Calu3 (cell line): ENCODE measurements at regions of chr7 and their contacts with region 1.

Region 1: DNA sequence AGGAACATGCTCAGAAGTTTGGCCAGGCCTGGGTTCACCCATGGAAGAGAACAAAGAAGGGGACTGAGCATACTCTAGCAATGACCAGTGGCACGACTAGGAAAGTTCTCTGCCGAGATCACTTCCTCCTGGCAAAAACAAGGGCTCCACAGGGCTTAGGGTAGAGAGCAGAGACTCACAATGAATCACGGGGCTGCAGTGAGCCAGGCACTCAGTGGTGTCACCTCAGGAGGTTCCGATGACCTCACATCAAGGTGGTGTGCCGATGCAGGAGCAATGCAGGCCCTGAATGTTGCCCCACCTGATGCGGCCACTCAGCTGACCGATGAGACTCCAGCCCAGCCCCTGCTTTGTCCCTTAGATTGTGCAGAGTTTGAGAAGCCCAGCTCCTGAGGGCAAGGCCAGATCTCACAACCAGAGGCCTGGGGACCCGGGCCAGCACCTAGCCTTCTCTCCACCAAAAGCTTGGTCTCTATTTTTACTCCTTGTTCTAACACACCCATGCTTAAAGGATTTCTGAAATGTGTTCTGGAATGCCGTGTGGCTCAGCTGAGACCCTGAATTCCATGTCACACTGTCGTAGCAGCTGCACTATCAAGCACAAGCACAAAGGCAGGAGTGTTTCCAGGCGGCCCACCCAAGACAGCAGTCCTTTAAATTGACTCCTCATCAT is 60.9 kb downstream of the COBL start:
- DNase-seq: peak; percentile 67
- H3K4me3 Mint-ChIP-seq: peak overlapping the region; percentile 29
- H3K27ac Mint-ChIP-seq: peak overlapping the region; percentile 45
- H3K4me1 Mint-ChIP-seq: peaks cover 65% of the 10 kb centered on the region
- H3K27me3 Mint-ChIP-seq: no peaks in the 10 kb centered on the region
- CTCF ChIP-seq: no peak

Region 2: DNA sequence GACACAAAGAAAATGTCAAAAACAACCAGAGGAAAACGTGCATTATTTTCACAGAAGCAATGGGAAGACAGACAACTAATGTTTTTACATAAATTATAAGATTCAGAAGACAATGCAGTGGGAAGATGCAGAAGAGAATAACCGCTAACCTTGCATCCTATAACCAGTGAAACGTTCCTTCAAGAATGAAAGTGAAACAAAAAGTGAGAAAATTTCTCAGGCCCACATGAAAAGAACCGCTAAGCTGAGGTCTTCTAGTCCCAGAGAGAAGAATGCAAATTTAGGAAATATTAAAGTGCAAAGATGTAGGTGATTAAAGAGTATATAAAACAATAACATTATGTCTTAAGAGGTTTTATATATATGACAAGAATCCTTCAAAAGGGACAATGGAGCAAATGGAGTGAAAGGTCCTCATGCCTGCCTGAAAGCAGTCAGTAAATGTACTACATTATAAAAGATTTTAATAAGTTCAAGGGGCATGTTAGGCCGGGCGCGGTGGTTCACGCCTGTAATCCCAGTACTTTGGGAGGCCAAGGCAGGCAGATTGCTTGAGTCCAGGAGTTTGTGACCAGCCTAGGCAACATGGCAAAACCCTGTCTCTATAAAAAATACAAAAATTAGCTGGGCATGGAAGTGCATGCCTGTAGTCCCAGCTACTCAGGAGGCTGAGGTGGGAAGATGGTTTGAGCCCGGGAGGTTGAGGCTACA is 647.3 kb before region 1 on chr7:
- CTCF ChIA-PET with region 1: no interaction called
- intact Hi-C with region 1: no loop called
- DNase-seq: no peak
- H3K4me3 Mint-ChIP-seq: no peak overlapping the region
- H3K27ac Mint-ChIP-seq: no peak overlapping the region
- H3K4me1 Mint-ChIP-seq: peaks cover 8% of the 10 kb centered on the region
- H3K27me3 Mint-ChIP-seq: no peaks in the 10 kb centered on the region
- CTCF ChIP-seq: no peak

Region 3: DNA sequence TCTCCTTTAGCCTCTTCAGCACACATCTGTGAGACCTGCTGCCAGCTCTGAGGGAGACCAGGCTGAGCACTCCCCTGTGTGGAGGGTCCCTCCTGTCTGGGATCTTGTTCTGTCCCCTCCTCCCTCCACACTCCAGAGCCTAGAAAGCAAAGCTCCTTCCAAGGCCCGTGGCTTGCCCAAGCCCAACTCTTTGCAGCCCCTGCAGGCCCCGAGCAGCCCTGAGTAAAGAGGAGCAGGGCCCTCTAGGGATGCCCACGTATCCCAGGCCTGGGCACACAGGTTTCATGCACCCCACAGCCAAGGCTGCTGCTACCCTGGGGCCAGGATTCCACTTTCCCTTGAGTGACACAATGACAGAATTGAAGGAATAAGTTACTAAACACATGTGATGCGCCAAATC is 36.9 kb after region 1 on chr7:
- CTCF ChIA-PET with region 1: no interaction called
- intact Hi-C with region 1: loop called (anchors 2 kb)
- DNase-seq: no peak
- H3K4me3 Mint-ChIP-seq: no peak overlapping the region
- H3K27ac Mint-ChIP-seq: no peak overlapping the region
- H3K4me1 Mint-ChIP-seq: peaks cover 57% of the 10 kb centered on the region
- H3K27me3 Mint-ChIP-seq: no peaks in the 10 kb centered on the region
- CTCF ChIP-seq: no peak

Region 4: GRCh38 chr7:51357821-51358220 is 102.1 kb after region 1 on chr7:
- CTCF ChIA-PET with region 1: interaction called, 6 read pairs
- intact Hi-C with region 1: loop called (anchors 2 kb)
- DNase-seq: no peak
- H3K4me3 Mint-ChIP-seq: no peak overlapping the region
- H3K27ac Mint-ChIP-seq: no peak overlapping the region
- H3K4me1 Mint-ChIP-seq: peaks cover 30% of the 10 kb centered on the region
- H3K27me3 Mint-ChIP-seq: peaks cover 12% of the 10 kb centered on the region
- CTCF ChIP-seq: peak; percentile 41

Region 5: DNA sequence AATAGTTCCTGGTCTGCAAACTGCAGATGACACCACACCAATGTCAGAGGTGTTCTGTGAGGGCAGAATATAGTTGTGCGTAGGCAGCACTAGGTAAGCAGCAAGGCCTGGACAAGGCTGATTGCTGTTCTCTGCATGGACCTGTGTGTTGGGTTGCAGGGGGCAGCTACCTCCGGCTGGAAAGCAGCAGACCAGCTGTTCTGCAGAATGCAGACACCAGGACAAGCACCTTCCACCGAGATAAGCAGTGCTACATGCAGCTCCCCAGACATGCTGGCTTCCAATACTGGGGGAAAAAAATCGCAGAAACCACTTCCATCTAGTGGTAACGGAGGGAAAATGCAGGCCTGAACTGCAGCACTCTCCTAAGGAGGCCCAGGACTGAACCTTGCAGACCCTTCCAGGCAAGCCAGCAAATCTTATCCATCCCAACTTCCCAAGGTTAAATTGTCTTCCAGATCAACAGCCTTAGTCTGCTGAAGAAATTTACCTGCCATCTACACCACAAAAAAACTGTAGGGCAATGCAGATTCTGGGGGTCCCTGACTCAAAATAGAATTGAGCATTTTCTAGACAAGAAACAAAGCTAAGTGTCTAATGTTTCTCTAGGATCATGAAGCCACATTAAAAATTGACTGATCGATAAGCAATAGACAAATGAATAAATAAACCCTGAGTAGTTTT is 111.4 kb after region 1 on chr7:
- CTCF ChIA-PET with region 1: interaction called, 9 read pairs
- intact Hi-C with region 1: loop called (anchors 1 kb)
- DNase-seq: peak; percentile 76
- H3K4me3 Mint-ChIP-seq: no peak overlapping the region
- H3K27ac Mint-ChIP-seq: no peak overlapping the region
- H3K4me1 Mint-ChIP-seq: peaks cover 9% of the 10 kb centered on the region
- H3K27me3 Mint-ChIP-seq: peaks cover 13% of the 10 kb centered on the region
- CTCF ChIP-seq: peak; percentile 90